ENCODE measurements at regions of chr4 and their contacts with region 1.

Region 1: DNA sequence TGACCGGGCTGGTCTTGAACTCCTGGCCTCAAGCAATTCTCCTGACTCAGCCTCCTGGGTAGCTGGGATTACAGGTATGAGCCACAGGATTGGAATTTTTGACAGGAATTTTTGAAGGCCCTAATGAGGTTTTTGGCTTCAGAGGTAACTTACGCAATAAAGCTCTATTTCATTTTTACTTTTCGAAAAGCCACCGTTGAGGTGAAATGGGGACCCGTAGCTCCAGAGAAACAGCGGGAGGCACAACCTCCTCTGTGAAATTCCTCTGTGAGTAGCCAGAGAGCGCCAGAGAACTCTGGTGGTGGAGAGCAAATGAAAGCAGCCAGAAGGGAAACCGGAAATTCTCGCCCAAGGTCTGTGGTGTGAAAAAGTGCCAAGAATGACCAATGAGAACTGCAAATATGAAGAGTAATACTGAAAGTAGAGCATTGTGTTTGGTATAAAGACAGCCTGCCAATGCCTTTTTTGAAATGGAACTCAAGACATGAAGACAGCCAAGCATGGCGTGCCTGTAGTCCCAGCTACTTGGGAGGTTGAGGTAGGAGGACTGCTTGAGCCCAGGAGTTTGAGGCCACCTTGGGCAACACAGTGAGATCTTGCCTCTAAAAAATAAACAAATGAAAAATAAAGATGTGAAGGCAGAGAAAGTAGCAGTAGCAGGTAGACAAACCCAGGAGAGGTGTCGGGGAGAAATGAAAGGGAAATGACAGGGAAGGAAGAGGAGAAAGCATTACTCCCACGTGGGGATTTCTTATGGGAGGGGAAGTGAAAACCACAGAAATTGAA is 33.0 kb upstream of the TMEM131L start:
- DNase-seq: peak; percentile 40 to 59
- ATAC-seq: peak; percentile 80 to 94 (median 87)
- H3K4me3 ChIP-seq: peak overlapping the region; percentile 44
- H3K27ac ChIP-seq: peak overlapping the region; percentile 61
- H3K4me1 ChIP-seq: no peaks in the 10 kb centered on the region
- H3K27me3 ChIP-seq: no peaks in the 10 kb centered on the region
- CTCF ChIP-seq: peak; percentile 59

Region 2: DNA sequence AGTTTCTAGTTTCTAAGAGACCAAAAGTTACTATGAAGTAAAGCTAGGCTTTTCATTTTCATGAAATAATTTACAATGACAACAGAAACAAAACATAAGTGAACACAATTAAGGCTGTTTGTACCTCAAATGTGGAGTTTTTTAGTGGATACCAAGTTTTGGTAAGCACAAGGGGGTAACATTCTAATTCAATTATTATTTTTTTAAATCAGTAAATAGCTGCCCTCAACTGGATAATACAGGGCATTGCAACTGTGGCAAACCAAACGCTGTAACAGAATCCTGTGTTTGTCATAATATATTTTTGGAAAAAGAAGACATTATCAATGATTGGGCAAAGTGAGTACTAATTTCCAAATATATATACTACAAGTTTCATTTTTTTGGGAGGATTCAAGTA is 1047.6 kb before region 1 on chr4:
- intact Hi-C with region 1: no loop called
- DNase-seq: no peak
- ATAC-seq: peak; percentile 49 to 72 (median 68)
- H3K4me3 ChIP-seq: no peak overlapping the region
- H3K27ac ChIP-seq: no peak overlapping the region
- H3K4me1 ChIP-seq: no peaks in the 10 kb centered on the region
- H3K27me3 ChIP-seq: no peaks in the 10 kb centered on the region
- CTCF ChIP-seq: peak; percentile 75

Region 3: DNA sequence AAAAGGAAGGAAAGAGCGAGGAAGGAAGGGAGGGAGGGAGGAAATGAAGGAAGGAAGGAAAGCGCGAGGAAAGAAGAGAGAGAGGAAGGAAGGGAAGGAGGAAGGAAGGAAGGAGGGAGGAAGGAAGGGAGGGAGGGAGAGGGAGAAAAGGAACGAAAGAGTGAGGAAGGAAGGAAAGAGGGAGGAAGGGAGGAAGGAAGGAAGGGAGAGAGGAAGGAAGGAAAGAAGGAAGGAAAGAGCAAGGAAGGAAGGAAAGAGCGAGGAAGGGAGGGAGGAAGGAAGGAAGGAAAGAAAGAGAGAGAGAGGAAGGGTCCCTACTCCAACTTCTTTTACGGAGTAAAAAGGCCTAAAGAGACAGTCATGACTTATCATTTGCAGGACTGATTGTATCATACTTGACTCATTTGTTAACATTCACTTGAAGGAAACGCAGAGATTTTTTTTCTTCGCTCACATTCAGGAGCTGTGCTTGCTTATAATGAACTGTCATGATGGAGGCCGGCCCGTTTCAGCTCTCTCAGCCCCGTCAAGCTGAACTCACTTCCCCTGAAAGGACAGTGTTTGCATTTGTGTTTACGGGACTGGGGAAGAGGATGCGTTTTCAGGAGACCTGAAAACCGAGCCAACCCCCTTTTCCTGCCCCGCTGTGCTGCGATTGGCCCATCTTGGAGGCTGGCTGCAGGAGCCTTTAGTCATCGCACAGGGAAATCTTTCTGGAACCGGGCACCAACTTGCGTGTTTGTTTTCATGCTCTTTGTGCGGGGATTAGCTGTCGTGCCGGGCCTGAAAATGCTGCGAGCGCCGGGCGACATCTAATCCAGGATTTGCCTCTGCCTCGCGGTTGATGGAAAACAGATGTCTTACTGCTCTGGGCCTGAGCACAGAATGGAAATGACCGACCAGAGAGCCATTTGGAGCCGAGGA is 211.1 kb before region 1 on chr4:
- intact Hi-C with region 1: loop called in 1 of 2 experiments (anchors 10 kb)
- DNase-seq: peak; percentile 57 to 74
- ATAC-seq: peak; percentile 55 to 83 (median 72)
- H3K4me3 ChIP-seq: peak overlapping the region; percentile 97
- H3K27ac ChIP-seq: peak overlapping the region; percentile 93
- H3K4me1 ChIP-seq: peaks cover 21% of the 10 kb centered on the region
- H3K27me3 ChIP-seq: no peaks in the 10 kb centered on the region
- CTCF ChIP-seq: no peak

Region 4: GRCh38 chr4:153573881-153574802 is 141.0 kb after region 1 on chr4:
- intact Hi-C with region 1: loop called (anchors 1 to 10 kb)
- DNase-seq: peak; percentile 37 to 74
- ATAC-seq: peak; percentile 80 to 91 (median 88)
- H3K4me3 ChIP-seq: no peak overlapping the region
- H3K27ac ChIP-seq: peak overlapping the region; percentile 92
- H3K4me1 ChIP-seq: peaks cover 33% of the 10 kb centered on the region
- H3K27me3 ChIP-seq: no peaks in the 10 kb centered on the region
- CTCF ChIP-seq: peak; percentile 76